ENCODE measurements at regions of chr5 and their contacts with region 1.

Region 1: DNA sequence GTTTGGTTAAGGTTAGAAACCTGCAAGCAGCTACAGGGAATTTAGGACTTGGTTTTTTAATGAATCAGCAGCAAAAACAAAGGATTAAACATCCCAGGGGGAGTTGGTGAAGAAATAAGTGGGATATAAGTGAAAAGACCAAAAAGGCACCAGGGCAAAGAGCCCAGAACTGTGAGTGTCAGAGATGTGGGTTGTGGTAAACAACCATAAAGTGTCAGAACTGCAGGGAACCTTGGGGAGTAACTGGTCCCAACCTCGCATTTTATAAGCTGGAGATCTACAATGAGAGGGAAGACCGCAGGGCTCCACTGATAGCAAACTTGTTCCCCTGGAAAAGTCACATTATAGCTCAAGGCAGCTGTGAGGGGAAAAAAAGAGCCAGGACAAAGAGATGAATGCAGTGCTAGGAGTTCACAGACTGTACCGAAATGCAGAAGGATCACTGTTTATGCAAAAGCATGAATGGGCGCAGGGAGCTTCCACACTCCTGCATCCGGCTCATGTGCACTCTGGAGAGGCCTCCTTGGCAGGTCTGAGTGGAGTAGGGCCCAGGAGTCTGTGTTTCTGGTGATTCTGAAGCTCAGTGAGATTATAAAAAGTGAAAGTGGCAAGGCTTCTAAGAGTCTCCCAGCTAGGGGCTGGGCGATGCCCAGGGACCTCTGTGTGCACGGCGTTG is 156.3 kb downstream of the GOLPH3 start:
- DNase-seq: peak; percentile 69
- H3K4me3 ChIP-seq: no peak overlapping the region
- H3K27ac ChIP-seq: peak overlapping the region; percentile 33 to 46 (median 42)
- H3K4me1 ChIP-seq: peaks cover 0 to 12% (median 9%) of the 10 kb centered on the region in 4 donors
- H3K27me3 ChIP-seq: no peaks in the 10 kb centered on the region
- CTCF ChIP-seq: no peak
- EP300 ChIP-seq: no peak
- POLR2A ChIP-seq: no peak

Region 2: DNA sequence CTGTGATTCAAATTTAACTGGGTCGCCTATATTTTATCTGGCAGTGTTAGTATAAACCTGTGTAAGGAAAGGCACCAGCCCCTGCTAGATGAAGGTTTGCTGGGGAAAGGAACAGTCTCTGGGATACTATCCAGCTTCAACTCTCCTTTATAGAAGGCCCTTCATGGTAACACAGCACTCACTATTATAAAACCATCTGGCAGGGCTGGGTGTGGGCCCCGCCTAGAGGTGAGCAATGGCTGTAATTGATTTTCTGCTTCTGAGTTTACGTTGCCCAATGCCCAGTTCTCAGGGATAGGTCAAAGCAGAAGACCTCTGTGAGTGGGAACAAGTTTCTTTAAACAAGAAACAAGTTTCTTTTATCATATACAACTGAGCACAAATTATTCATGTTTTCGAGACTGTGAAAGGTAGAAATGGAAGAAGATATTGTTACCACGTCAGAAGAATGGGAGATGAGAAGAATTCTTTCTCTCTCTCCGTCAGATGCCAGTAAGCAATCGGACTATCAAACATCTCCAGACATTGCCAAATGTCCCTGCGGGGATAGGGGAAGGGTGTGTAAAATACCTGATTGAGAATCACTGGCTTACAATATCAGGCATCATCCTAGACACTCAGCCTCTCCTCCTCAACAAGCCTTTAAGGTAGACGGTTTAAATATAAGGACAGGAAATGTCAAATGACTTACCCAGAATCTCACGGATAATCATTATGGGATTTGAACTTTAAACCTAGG is 173.0 kb before region 1 on chr5:
- intact Hi-C with region 1: no loop called
- DNase-seq: no peak
- H3K4me3 ChIP-seq: no peak overlapping the region
- H3K27ac ChIP-seq: no peak overlapping the region
- H3K4me1 ChIP-seq: no peaks in the 10 kb centered on the region
- H3K27me3 ChIP-seq: no peaks in the 10 kb centered on the region
- CTCF ChIP-seq: no peak
- EP300 ChIP-seq: no peak
- POLR2A ChIP-seq: no peak

Region 3: DNA sequence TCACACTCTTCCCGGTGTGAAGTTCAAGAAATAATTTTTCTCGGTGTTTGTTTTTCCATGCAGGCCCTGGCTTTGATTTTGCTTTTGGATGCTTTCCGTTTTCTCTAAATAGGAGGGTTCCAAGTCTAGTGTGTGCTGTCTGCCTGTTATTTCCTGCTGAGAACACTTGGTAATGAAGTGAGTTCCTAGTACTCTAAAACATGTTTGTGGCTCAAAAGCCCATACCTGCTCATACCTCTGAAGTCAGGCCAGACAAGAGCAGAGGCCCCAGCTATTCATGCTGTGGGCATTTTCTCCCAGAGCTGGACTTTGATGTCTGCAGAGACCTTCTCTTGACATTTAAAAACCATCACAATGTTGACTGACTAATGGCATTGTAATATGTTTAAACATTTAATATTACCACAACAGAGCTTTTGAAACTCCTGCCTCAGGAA is 54.9 kb before region 1 on chr5:
- intact Hi-C with region 1: loop called (anchors 10 kb)
- DNase-seq: no peak
- H3K4me3 ChIP-seq: no peak overlapping the region
- H3K27ac ChIP-seq: peak overlapping the region; percentile 38 to 63 (median 51)
- H3K4me1 ChIP-seq: peaks cover 0 to 26% (median 22%) of the 10 kb centered on the region in 4 donors
- H3K27me3 ChIP-seq: no peaks in the 10 kb centered on the region
- CTCF ChIP-seq: no peak
- EP300 ChIP-seq: no peak
- POLR2A ChIP-seq: no peak